Heart left ventricle (tissue), 16 donors: ENCODE measurements at regions of chr18 and their contacts with region 1.

Region 1: DNA sequence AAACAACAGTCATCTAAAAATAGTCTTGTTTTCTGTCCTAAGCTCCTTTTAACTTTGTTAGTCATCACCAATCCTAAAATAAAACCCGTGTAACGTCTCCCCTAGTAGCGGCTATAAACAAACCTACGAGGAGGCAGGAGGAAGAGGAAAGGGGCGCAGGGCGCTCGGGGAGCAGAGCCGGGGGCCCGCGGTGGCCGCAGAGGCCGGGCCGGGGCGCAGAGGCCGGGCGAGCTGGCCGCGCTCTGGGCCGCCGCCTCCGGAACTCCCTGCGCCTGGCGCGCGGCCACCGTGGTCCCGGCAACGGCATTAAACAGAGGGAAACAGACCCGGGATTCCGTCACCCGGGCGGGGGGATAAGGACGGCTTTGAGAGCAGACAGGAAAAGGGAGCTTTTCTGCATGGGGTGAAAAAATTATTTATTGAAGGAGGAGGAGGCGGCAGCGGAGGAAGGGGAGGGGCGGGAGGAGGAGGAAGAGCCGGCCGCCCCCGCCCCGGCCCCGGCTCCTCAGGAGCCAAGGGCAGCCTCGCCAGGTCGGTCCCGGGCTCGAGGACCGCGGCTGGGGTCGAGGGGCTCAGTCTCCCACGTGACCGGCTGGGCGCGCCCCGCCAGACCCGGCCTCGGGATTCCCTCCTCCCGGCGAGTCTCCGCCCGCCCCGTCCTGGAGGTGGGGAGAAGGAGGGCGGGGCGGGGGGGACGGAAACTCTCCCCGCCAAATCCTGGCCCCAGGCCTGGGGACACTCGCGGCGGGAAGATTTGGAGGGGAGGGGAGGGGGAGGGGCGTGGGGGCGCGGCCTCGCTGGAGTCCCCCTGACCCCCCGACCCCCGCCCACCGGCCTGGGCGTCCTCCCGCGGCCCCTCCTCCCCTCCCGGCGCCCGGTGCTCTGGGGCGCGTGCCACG is 1.8 kb upstream of the NFATC1 start:
- DNase-seq: peak; percentile 95 to 97 (median 96)
- ATAC-seq: peak; percentile 62 to 86 (median 80)
- H3K4me3 ChIP-seq: peak overlapping the region; percentile 35 to 88 (median 60)
- H3K27ac ChIP-seq: peak overlapping the region; percentile 87 to 97 (median 95)
- H3K4me1 ChIP-seq: peaks cover 0 to 44% (median 25%) of the 10 kb centered on the region in 12 donors
- H3K27me3 ChIP-seq: peaks cover 0 to 49% (median 0%) of the 10 kb centered on the region in 9 donors
- CTCF ChIP-seq: no peak
- POLR2A ChIP-seq: peak; percentile 23 to 43

Region 2: GRCh38 chr18:78914249-78914935 is 479.5 kb before region 1 on chr18:
- intact Hi-C with region 1: no loop called
- DNase-seq: no peak
- ATAC-seq: peak in 1 of 4 donors; percentile 29
- H3K4me3 ChIP-seq: no peak overlapping the region
- H3K27ac ChIP-seq: no peak overlapping the region
- H3K4me1 ChIP-seq: no peaks in the 10 kb centered on the region
- H3K27me3 ChIP-seq: peaks cover 0 to 3% (median 0%) of the 10 kb centered on the region in 9 donors
- CTCF ChIP-seq: no peak
- POLR2A ChIP-seq: no peak

Region 3: GRCh38 chr18:79458131-79458838 is 64.4 kb after region 1 on chr18:
- intact Hi-C with region 1: loop called in 4 of 10 experiments (anchors 2 to 5 kb)
- DNase-seq: peak in 4 of 5 donors; percentile 77 to 84 (median 78)
- ATAC-seq: peak; percentile 71 to 85 (median 82)
- H3K4me3 ChIP-seq: peak overlapping the region in 9 of 12 donors; percentile 15 to 41 (median 22)
- H3K27ac ChIP-seq: peak overlapping the region; percentile 63 to 90 (median 80)
- H3K4me1 ChIP-seq: peaks cover 3 to 45% (median 32%) of the 10 kb centered on the region in 12 donors
- H3K27me3 ChIP-seq: no peaks in the 10 kb centered on the region
- CTCF ChIP-seq: no peak
- POLR2A ChIP-seq: no peak

Region 4: DNA sequence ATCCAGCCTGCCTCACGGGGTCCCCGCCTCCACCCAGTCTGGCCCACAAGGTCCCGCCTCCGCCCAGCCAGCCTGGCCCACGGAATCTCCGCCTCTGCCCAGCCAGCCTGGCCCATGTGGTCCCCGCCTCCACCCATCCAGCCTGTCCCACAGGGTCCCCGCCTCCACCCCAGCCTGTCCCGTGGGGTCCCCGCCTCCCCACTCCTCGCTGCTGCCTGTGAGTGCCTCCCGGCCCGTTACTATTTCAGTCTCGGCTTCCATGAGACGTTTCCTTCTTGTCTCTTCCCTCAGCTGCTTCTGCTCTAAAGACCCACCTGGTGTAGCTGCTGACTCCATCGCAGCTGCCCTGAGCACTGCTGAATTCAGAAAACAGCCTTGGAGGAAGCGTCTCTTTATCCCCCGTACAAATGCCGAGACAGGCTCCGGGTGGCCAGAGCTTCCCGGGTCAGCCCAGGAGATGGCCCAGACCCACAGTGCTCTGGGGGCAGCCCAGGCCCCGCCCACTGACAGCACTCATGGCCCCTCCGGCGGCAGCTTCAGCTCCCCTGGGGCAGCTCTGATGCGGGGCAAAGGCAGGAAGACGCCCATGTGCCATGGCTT is 71.6 kb after region 1 on chr18:
- intact Hi-C with region 1: loop called in 3 of 10 experiments (anchors 5 kb)
- DNase-seq: peak in 3 of 5 donors; percentile 41 to 53 (median 53)
- ATAC-seq: peak in 3 of 4 donors; percentile 67 to 79 (median 77)
- H3K4me3 ChIP-seq: peak overlapping the region in 5 of 12 donors; percentile 8 to 47 (median 35)
- H3K27ac ChIP-seq: peak overlapping the region in 7 of 12 donors; percentile 3 to 70 (median 38)
- H3K4me1 ChIP-seq: peaks cover 3 to 27% (median 16%) of the 10 kb centered on the region in 12 donors
- H3K27me3 ChIP-seq: no peaks in the 10 kb centered on the region
- CTCF ChIP-seq: no peak
- POLR2A ChIP-seq: no peak

Region 5: DNA sequence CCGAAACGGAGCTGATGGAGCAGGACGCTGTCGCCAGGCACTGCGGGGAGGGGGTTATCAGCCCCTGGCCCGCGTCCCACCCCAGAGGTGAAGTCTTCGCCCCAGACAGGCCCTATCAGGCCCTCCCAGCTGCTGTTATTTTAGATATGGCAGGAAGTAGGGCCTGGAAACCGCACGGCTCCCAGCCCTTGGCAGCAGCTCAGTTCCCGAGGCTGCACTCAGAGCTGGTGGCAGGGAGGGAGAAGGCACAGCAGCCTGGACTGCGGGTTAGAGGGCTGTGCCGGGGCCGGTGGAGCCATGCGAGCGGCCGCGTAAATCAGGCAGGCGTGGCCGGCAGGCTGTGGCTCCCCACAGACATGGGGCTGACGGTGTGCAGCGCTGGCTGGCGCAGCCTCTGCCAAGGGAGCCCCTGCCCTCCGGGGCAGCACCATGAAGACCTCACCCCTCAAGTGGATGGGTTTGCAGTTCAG is 113.2 kb after region 1 on chr18:
- intact Hi-C with region 1: loop called in 4 of 10 experiments (anchors 1 to 5 kb)
- DNase-seq: peak; percentile 81 to 90 (median 88)
- ATAC-seq: peak; percentile 91 to 93 (median 92)
- H3K4me3 ChIP-seq: peak overlapping the region in 11 of 12 donors; percentile 25 to 55 (median 44)
- H3K27ac ChIP-seq: peak overlapping the region; percentile 85 to 97 (median 92)
- H3K4me1 ChIP-seq: peaks cover 3 to 38% (median 29%) of the 10 kb centered on the region in 12 donors
- H3K27me3 ChIP-seq: no peaks in the 10 kb centered on the region
- CTCF ChIP-seq: no peak
- POLR2A ChIP-seq: no peak

Region 6: GRCh38 chr18:79528846-79529245 is 135.0 kb after region 1 on chr18:
- intact Hi-C with region 1: loop called in 5 of 10 experiments (anchors 5 kb)
- DNase-seq: peak; percentile 53 to 70 (median 67)
- ATAC-seq: peak; percentile 18 to 60 (median 42)
- H3K4me3 ChIP-seq: no peak overlapping the region
- H3K27ac ChIP-seq: no peak overlapping the region
- H3K4me1 ChIP-seq: peaks cover 0 to 21% (median 12%) of the 10 kb centered on the region in 12 donors
- H3K27me3 ChIP-seq: peaks cover 0 to 7% (median 0%) of the 10 kb centered on the region in 9 donors
- CTCF ChIP-seq: peak; percentile 83 to 95 (median 91)
- POLR2A ChIP-seq: no peak

Region 7: DNA sequence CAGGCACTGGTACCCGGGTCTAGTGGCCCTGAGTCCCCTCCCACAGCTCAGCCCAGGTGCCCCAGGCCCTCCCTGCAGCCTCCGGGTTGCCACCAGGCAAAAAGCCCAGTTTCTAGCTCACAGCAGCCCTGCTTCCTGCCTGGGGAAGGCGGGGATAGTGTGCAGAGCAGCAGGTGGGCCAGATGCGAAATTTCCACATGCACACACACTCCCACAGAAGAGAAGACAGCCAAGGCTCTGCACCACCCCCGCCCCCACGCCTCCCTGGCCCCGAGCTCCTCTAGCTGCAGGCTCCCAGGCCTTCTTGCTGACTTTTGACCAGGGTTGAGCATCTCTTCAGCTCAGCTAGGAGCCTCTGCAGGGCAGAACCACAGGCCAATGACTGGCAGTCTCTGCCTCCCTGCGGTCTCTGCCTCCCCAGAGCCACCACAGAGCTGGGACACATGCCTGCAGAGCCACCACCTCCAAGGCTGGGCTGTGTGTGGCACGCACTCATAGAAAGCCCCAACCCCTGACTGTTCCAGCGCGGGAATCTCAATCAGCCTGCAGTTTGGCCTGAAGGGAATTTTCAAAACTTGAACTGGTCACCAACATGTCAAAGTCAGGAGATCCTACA is 550.4 kb after region 1 on chr18:
- intact Hi-C with region 1: loop called in 1 of 10 experiments (anchors 10 kb)
- DNase-seq: no peak
- ATAC-seq: peak in 1 of 4 donors; percentile 15
- H3K4me3 ChIP-seq: no peak overlapping the region
- H3K27ac ChIP-seq: no peak overlapping the region
- H3K4me1 ChIP-seq: peaks cover 0 to 78% (median 43%) of the 10 kb centered on the region in 12 donors
- H3K27me3 ChIP-seq: no peaks in the 10 kb centered on the region
- CTCF ChIP-seq: no peak
- POLR2A ChIP-seq: no peak

Region 8: GRCh38 chr18:80034068-80034851 is 640.4 kb after region 1 on chr18 and contains the start of gene RBFA:
- intact Hi-C with region 1: loop called in 1 of 10 experiments (anchors 10 kb)
- DNase-seq: peak; percentile 100
- ATAC-seq: peak; percentile 93 to 96 (median 95)
- H3K4me3 ChIP-seq: peak within 1 kb of the TSS; percentile 56 to 98 (median 84)
- H3K27ac ChIP-seq: peak within 1 kb of the TSS; percentile 69 to 91 (median 87)
- H3K4me1 ChIP-seq: peaks cover 0 to 18% (median 10%) of the 10 kb centered on the region in 12 donors
- H3K27me3 ChIP-seq: no peaks in the 10 kb centered on the region
- CTCF ChIP-seq: peak in 11 of 12 donors; percentile 12 to 52 (median 42)
- POLR2A ChIP-seq: peak in 1 of 2 donors; percentile 81
- total RNA-seq, gene RBFA: 15.5 to 32.2 (median 21.6) TPM